ENCODE measurements at regions of chr19 and their contacts with region 1.

Region 1: GRCh38 chr19:43723588-43723987 is 7.7 kb downstream of the IRGC start:
- DNase-seq: no peak
- H3K4me3 ChIP-seq: no peak overlapping the region
- H3K27ac ChIP-seq: no peak overlapping the region
- H3K4me1 ChIP-seq: no peaks in the 10 kb centered on the region
- H3K27me3 ChIP-seq: no peaks in the 10 kb centered on the region
- CTCF ChIP-seq: peak; percentile 62

Region 2: GRCh38 chr19:43526884-43527859 is 196.4 kb before region 1 on chr19 and contains the start of gene ETHE1:
- CTCF ChIA-PET with region 1: no interaction called
- POLR2A ChIA-PET with region 1: no interaction called
- intact Hi-C with region 1: no loop called
- DNase-seq: peak; percentile 37 to 81
- H3K4me3 ChIP-seq: peak within 1 kb of the TSS; percentile 97
- H3K27ac ChIP-seq: peak within 1 kb of the TSS; percentile 46
- H3K4me1 ChIP-seq: peaks cover 59% of the 10 kb centered on the region
- H3K27me3 ChIP-seq: no peaks in the 10 kb centered on the region
- CTCF ChIP-seq: no peak
- total RNA-seq, gene ETHE1: 83.4 and 89.3 TPM in 2 replicates

Region 3: GRCh38 chr19:43606569-43607229 is 116.9 kb before region 1 on chr19:
- CTCF ChIA-PET with region 1: no interaction called
- POLR2A ChIA-PET with region 1: interaction called, 26 read pairs
- intact Hi-C with region 1: no loop called
- DNase-seq: no peak
- H3K4me3 ChIP-seq: no peak overlapping the region
- H3K27ac ChIP-seq: no peak overlapping the region
- H3K4me1 ChIP-seq: no peaks in the 10 kb centered on the region
- H3K27me3 ChIP-seq: no peaks in the 10 kb centered on the region
- CTCF ChIP-seq: no peak

Region 4: DNA sequence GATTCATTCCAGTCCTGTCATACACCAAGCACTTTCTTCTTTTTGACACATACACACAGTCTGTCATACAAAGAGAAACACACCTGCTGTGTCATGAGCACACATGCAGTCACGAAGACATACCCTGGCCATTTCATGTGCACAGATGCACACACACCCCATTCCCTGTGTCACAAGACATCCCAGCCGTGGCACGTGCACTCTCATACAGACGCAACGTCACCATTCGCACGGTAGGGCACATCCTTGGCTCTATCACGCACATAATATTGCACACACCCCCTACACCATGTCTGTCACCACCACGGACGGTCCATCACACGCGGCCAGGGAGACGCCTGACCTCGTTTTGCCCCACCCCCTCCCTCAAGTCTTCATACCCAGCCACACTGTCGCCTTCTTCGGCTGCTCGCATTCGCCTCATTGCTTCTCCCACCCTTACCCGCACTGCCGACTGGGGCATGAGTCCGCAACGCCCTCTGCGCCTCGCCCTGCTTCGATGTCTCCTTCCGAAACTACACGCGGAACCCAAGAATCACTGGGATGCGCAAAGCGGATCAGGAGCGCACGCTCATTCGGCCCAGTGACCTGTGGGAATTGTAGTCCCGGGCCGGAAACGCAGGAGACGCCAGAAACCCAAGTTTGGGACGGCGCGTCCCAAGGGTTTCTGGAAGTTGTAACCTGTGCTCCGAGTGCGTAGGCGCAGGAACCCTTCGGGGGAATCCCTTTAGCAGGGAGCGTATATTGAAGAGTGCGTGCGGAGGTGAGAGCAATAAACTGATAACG is 96.7 kb after region 1 on chr19:
- CTCF ChIA-PET with region 1: no interaction called
- POLR2A ChIA-PET with region 1: no interaction called
- intact Hi-C with region 1: no loop called
- DNase-seq: no peak
- H3K4me3 ChIP-seq: no peak overlapping the region
- H3K27ac ChIP-seq: no peak overlapping the region
- H3K4me1 ChIP-seq: no peaks in the 10 kb centered on the region
- H3K27me3 ChIP-seq: no peaks in the 10 kb centered on the region
- CTCF ChIP-seq: no peak

Region 5: GRCh38 chr19:44212250-44212865 is 488.8 kb after region 1 on chr19 and contains the start of gene ZNF227:
- CTCF ChIA-PET with region 1: no interaction called
- POLR2A ChIA-PET with region 1: interaction called, 38 read pairs
- intact Hi-C with region 1: no loop called
- DNase-seq: peak; percentile 84 to 89
- H3K4me3 ChIP-seq: peak within 1 kb of the TSS; percentile 94
- H3K27ac ChIP-seq: peak within 1 kb of the TSS; percentile 10; the same call in 1 of the 2 replicates
- H3K4me1 ChIP-seq: peaks cover 17% of the 10 kb centered on the region
- H3K27me3 ChIP-seq: no peaks in the 10 kb centered on the region
- CTCF ChIP-seq: no peak
- total RNA-seq, gene ZNF227: 14.2 and 16.5 TPM in 2 replicates